ENCODE measurements at regions of chr5 and their contacts with region 1.

Region 1: GRCh38 chr5:139293504-139294373 is at the start of gene MATR3:
- DNase-seq: peak; percentile 88 to 95 (median 93)
- ATAC-seq: peak; percentile 90
- H3K4me3 ChIP-seq: peak within 1 kb of the TSS; percentile 72 to 94
- H3K4me3 Mint-ChIP-seq: peak within 1 kb of the TSS; percentile 98
- H3K27ac ChIP-seq: peak within 1 kb of the TSS; percentile 98
- H3K27ac Mint-ChIP-seq: peak within 1 kb of the TSS; percentile 98
- H3K4me1 ChIP-seq: peaks cover 34% of the 10 kb centered on the region
- H3K4me1 Mint-ChIP-seq: peaks cover 41% of the 10 kb centered on the region
- H3K27me3 ChIP-seq: no peaks in the 10 kb centered on the region
- H3K27me3 Mint-ChIP-seq: no peaks in the 10 kb centered on the region
- CTCF ChIP-seq: no peak
- total RNA-seq, gene MATR3: 420 to 430 TPM

Region 2: DNA sequence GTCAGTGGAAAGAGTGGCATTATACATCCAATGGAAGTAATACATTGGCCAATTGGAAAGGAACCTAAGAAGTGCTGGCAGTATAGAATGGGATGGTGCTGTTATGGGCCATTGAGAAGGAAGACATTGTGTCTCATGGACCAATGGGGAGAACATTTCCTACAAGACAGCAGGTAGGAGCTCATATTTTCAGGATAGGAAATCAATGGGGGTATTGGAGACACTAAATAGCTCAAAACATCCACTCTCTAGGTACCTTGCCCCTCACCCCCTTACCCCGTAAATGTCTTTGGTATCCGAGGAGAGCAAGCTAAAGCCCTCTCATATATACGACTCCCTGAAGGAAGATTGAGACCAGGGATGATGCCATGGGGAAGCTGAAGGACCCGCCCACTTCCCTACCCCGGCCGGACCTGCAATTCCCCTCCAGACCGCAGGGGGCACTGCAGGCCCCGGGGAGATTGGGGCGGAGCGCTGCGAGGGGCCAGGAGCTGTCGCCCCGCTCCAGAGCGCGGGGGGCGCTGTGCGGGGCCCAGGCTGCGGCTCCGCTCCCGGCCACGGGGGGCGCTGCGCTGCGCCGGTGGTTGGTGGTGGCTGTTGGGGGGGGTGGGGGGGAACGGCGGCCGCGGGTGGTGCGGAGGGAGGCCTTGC is 941.5 kb before region 1 on chr5 and contains the start of gene KDM3B:
- CTCF ChIA-PET with region 1: no interaction called
- POLR2A ChIA-PET with region 1: interaction called, 3 read pairs
- intact Hi-C with region 1: loop called in 1 of 2 experiments (anchors 5 kb)
- DNase-seq: peak; percentile 86 to 96 (median 92)
- ATAC-seq: peak; percentile 89
- H3K4me3 ChIP-seq: peak within 1 kb of the TSS; percentile 87 to 97
- H3K4me3 Mint-ChIP-seq: peak within 1 kb of the TSS; percentile 97
- H3K27ac ChIP-seq: peak within 1 kb of the TSS; percentile 83 to 89
- H3K27ac Mint-ChIP-seq: peak within 1 kb of the TSS; percentile 97
- H3K4me1 ChIP-seq: peaks cover 34% of the 10 kb centered on the region
- H3K4me1 Mint-ChIP-seq: peaks cover 47% of the 10 kb centered on the region
- H3K27me3 ChIP-seq: no peaks in the 10 kb centered on the region
- H3K27me3 Mint-ChIP-seq: no peaks in the 10 kb centered on the region
- CTCF ChIP-seq: peak; percentile 99
- total RNA-seq, gene KDM3B: 60.2 to 60.3 TPM

Region 3: GRCh38 chr5:138726848-138727247 is 566.9 kb before region 1 on chr5:
- CTCF ChIA-PET with region 1: no interaction called
- POLR2A ChIA-PET with region 1: no interaction called
- intact Hi-C with region 1: no loop called
- DNase-seq: peak in 1 of 9 experiments; percentile 19
- ATAC-seq: no peak
- H3K4me3 ChIP-seq: no peak overlapping the region
- H3K4me3 Mint-ChIP-seq: no peak overlapping the region
- H3K27ac ChIP-seq: no peak overlapping the region
- H3K27ac Mint-ChIP-seq: no peak overlapping the region
- H3K4me1 ChIP-seq: peaks cover 8% of the 10 kb centered on the region
- H3K4me1 Mint-ChIP-seq: peaks cover 11% of the 10 kb centered on the region
- H3K27me3 ChIP-seq: peaks cover 0 to 12% of the 10 kb centered on the region in 2 experiments
- H3K27me3 Mint-ChIP-seq: peaks cover 55% of the 10 kb centered on the region
- CTCF ChIP-seq: no peak

Region 4: DNA sequence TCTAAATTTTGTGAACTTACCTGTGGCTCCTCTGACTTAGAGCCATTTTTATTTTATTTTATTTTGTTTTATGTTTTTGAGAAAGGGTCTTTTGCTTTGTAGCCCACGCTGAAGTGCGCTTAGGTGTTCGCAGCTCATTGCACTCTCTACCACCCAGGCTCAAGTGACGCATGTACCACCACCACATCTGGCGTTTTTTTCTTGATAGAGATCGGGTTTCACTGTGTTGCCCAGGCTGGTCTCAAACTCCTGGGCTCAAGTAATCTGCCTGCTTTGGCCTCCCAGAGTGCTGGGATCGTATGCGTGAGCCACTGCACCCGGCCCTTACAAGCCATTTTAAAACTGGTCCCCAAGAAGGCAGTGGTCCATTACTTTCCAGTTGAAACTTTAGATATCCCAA is 18.3 kb after region 1 on chr5:
- CTCF ChIA-PET with region 1: interaction called, 4 read pairs
- POLR2A ChIA-PET with region 1: interaction called, 49 read pairs
- intact Hi-C with region 1: loop called (anchors 2 kb)
- DNase-seq: no peak
- ATAC-seq: no peak
- H3K4me3 ChIP-seq: no peak overlapping the region
- H3K4me3 Mint-ChIP-seq: peak overlapping the region; percentile 9
- H3K27ac ChIP-seq: no peak overlapping the region
- H3K27ac Mint-ChIP-seq: no peak overlapping the region
- H3K4me1 ChIP-seq: peaks cover 73% of the 10 kb centered on the region
- H3K4me1 Mint-ChIP-seq: peaks cover 75% of the 10 kb centered on the region
- H3K27me3 ChIP-seq: no peaks in the 10 kb centered on the region
- H3K27me3 Mint-ChIP-seq: no peaks in the 10 kb centered on the region
- CTCF ChIP-seq: no peak

Region 5: GRCh38 chr5:139354186-139354585 is 60.4 kb after region 1 on chr5:
- CTCF ChIA-PET with region 1: no interaction called
- POLR2A ChIA-PET with region 1: interaction called, 11 read pairs
- intact Hi-C with region 1: no loop called
- DNase-seq: no peak
- ATAC-seq: no peak
- H3K4me3 ChIP-seq: no peak overlapping the region
- H3K4me3 Mint-ChIP-seq: no peak overlapping the region
- H3K27ac ChIP-seq: no peak overlapping the region
- H3K27ac Mint-ChIP-seq: no peak overlapping the region
- H3K4me1 ChIP-seq: peaks cover 9% of the 10 kb centered on the region
- H3K4me1 Mint-ChIP-seq: peaks cover 62% of the 10 kb centered on the region
- H3K27me3 ChIP-seq: no peaks in the 10 kb centered on the region
- H3K27me3 Mint-ChIP-seq: no peaks in the 10 kb centered on the region
- CTCF ChIP-seq: no peak

Region 6: DNA sequence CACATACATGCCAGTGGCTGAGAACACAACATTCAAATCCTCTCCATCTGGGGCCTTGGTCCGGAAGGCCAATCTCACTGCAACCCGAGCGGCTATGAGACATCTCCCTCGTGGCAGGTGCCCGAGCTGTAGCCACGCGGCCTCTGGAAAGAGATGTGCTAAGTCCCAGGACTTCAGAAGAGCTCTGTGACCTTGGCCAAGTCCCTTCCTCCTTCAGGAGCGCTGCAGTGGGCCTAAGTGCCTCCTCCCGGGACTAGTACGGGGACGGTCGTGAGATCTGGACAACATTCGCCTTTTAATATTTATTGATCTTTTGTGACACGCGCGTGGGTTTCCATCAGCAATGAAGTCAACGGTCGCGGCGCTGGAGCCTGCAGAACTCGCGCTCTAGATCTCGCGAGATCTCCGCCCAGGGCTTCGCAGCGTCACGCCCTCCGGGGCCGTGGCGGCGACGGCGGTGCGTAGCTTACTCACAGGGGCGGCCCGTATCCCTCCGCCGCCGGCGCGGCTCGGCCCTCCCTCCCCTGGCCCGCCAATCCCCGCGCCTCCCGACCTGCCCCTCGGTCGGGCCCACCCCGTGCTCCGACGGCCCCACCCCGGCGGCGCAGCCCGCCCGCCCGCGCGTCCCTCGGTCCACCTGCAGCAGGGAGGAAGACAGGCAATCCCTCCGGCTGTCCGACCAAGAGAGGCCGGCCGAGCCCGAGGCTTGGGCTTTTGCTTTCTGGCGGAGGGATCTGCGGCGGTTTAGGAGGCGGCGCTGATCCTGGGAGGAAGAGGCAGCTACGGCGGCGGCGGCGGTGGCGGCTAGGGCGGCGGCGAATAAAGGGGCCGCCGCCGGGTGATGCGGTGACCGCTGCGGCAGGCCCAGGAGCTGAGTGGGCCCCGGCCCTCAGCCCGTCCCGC is 267.3 kb after region 1 on chr5 and contains the start of gene UBE2D2:
- CTCF ChIA-PET with region 1: no interaction called
- POLR2A ChIA-PET with region 1: interaction called, 6 read pairs
- intact Hi-C with region 1: loop called (anchors 5 kb)
- DNase-seq: peak; percentile 96 to 99 (median 97)
- ATAC-seq: peak; percentile 84
- H3K4me3 ChIP-seq: peak within 1 kb of the TSS; percentile 84 to 91
- H3K4me3 Mint-ChIP-seq: peak within 1 kb of the TSS; percentile 93
- H3K27ac ChIP-seq: peak within 1 kb of the TSS; percentile 87 to 89
- H3K27ac Mint-ChIP-seq: peak within 1 kb of the TSS; percentile 97
- H3K4me1 ChIP-seq: peaks cover 30% of the 10 kb centered on the region
- H3K4me1 Mint-ChIP-seq: peaks cover 35% of the 10 kb centered on the region
- H3K27me3 ChIP-seq: no peaks in the 10 kb centered on the region
- H3K27me3 Mint-ChIP-seq: no peaks in the 10 kb centered on the region
- CTCF ChIP-seq: no peak
- total RNA-seq, gene UBE2D2: 180 TPM

Measured in CD8-positive, alpha-beta T cell (primary cell).